ENCODE measurements at regions of chr6 and their contacts with region 1.

Region 1: GRCh38 chr6:112269114-112269513 is 14.7 kb upstream of the LAMA4 start:
- DNase-seq: peak in 1 of 5 donors; percentile 34
- ATAC-seq: peak; percentile 57 to 75 (median 66)
- H3K4me3 ChIP-seq: no peak overlapping the region
- H3K27ac ChIP-seq: peak overlapping the region; percentile 6 to 80 (median 70)
- H3K4me1 ChIP-seq: peaks cover 0 to 31% (median 22%) of the 10 kb centered on the region in 12 donors
- H3K27me3 ChIP-seq: no peaks in the 10 kb centered on the region
- CTCF ChIP-seq: peak in 9 of 12 donors; percentile 11 to 58 (median 42)
- POLR2A ChIP-seq: no peak

Region 2: DNA sequence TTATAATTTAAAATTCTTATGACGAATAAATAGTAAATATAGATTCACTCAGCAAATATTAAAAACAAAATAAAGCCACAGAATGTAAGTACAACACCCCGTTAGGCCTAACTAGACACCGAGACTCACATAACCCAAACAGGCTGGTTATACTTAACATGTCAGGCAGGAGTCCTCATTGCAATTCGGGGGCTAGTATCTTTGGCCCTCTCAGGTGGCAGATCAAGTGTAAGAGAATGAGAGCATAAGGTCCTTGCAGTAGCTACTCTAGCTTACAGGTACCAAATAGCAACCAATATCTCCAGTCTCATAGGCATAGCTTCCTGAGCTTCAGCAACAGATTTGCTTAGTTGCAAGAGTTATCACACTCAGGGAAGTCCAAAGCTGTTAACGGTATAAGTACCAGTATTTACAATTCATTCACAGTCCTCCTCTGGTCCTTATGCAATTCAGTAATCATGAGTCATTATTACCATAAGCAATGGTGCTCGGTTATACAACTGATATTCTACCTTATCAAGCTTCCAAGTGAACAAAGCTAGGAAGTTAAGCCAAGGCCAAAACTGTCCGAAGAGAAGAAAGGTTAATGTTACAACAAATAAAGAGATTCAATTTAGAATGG is 806.2 kb before region 1 on chr6:
- intact Hi-C with region 1: no loop called
- DNase-seq: no peak
- ATAC-seq: peak; percentile 77 to 96 (median 93)
- H3K4me3 ChIP-seq: no peak overlapping the region
- H3K27ac ChIP-seq: peak overlapping the region in 10 of 12 donors; percentile 27 to 63 (median 52)
- H3K4me1 ChIP-seq: peaks cover 0 to 33% (median 18%) of the 10 kb centered on the region in 12 donors
- H3K27me3 ChIP-seq: no peaks in the 10 kb centered on the region
- CTCF ChIP-seq: no peak
- POLR2A ChIP-seq: no peak

Region 3: GRCh38 chr6:111861431-111861885 is 407.7 kb before region 1 on chr6:
- intact Hi-C with region 1: loop called in 1 of 10 experiments (anchors 5 kb)
- DNase-seq: no peak
- ATAC-seq: peak in 1 of 4 donors; percentile 22
- H3K4me3 ChIP-seq: no peak overlapping the region
- H3K27ac ChIP-seq: no peak overlapping the region
- H3K4me1 ChIP-seq: peaks cover 0 to 87% (median 41%) of the 10 kb centered on the region in 12 donors
- H3K27me3 ChIP-seq: no peaks in the 10 kb centered on the region
- CTCF ChIP-seq: no peak
- POLR2A ChIP-seq: no peak

Region 4: DNA sequence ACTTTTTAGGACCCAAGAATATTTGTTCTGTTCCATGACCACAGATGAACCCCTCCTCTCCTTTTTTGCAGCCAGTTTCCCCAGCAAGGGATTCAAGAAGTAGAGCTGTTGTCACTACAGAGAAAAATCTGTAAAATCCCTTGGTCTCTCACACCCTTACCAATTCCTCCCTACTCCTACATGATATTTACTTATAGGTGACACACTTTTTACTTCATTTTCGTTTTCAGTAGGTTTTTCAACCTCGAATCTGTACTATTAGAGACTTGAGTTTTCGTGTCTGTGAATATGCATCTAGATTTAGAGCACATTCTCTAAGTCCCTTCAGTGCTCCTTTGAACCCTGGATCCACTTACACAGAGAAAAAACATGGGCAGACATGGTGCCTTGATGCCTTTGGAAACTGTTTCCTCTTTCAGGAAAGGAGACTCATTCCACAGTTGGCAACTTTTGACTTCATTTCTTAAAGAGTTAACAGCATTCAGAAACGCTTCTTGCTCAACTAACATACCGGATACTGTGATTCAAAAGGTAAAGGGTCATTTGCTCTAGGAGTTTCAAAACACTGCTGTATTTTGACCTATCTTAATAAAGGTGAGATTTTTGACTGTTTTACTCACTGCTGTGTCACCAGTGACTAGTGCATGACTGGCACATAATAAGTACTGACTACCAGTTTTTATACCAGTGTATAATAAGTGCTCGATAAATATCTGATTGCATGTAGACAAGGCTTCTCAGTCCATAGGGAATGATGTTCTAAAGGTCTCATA is 65.4 kb before region 1 on chr6:
- intact Hi-C with region 1: loop called in 1 of 10 experiments (anchors 5 kb)
- DNase-seq: no peak
- ATAC-seq: peak in 2 of 4 donors; percentile 35 to 50
- H3K4me3 ChIP-seq: no peak overlapping the region
- H3K27ac ChIP-seq: peak overlapping the region in 10 of 12 donors; percentile 7 to 65 (median 42)
- H3K4me1 ChIP-seq: peaks cover 4 to 46% (median 25%) of the 10 kb centered on the region in 12 donors
- H3K27me3 ChIP-seq: no peaks in the 10 kb centered on the region
- CTCF ChIP-seq: no peak
- POLR2A ChIP-seq: no peak

Region 5: DNA sequence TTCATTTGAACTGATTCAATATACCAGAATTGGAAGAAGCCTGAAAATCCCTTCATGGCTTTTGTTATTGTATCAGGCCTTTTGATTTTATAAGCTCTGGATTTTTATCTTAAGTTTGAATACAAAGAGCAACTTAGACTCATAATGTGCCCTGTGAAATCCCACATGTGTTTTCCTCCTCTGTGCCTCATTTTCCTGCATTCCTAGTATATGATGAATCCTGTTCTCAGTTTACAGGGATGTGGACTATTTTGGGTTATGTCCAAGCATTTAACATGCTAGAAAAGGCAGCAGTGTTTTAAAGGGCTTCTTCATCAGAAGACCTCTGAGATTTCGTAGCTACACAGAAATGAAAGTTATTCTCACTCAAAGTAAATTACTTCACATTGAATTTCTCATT is 533.0 kb after region 1 on chr6:
- intact Hi-C with region 1: no loop called
- DNase-seq: no peak
- ATAC-seq: peak in 1 of 4 donors; percentile 36
- H3K4me3 ChIP-seq: no peak overlapping the region
- H3K27ac ChIP-seq: no peak overlapping the region
- H3K4me1 ChIP-seq: peaks cover 0 to 5% (median 0%) of the 10 kb centered on the region in 12 donors
- H3K27me3 ChIP-seq: no peaks in the 10 kb centered on the region
- CTCF ChIP-seq: no peak
- POLR2A ChIP-seq: no peak

Measured in heart left ventricle (tissue), 16 donors.